Right ventricle myocardium superior (tissue), 1 donor: ENCODE measurements at regions of chr21 and their contacts with region 1.

Region 1: DNA sequence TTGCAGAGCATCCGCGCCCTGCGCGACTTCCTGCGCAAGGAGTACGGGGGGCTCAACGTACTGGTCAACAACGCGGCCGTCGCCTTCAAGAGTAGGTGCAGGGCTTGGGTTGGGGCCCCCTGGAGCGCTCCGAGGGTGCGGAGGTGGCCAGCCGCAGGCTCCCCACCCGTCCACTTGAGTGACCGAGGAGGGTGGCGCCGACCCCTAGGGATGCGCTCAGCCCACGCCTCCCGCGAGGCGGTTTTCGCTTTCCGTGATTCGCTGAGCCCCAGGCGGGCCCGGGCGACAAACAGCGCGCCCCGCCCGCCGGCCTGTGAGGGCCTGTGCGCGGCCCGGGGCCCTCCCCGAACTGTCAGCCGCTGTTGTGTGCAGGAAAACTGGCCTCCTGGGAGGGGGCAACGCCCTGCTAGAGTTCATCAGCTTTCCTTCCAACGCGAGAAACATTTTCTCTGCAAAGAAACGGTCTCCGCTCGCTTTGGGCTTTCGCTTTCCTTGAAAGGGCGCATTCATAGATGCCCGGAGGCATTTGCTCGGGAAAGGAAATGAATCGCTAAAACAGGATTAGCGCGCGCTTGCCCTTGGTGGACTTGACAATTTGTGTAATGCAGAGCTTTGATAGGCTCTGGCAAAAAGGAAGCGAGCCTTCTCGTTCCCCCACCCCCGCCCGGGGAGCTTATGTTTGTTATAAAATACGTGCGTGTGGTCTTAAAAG is 668 bp downstream of the CBR3 start:
- DNase-seq: peak; percentile 89
- ATAC-seq: peak; percentile 94

Region 2: GRCh38 chr21:36209626-36210171 is 74.2 kb after region 1 on chr21:
- intact Hi-C with region 1: loop called (anchors 5 kb)
- DNase-seq: no peak
- ATAC-seq: no peak

Region 3: DNA sequence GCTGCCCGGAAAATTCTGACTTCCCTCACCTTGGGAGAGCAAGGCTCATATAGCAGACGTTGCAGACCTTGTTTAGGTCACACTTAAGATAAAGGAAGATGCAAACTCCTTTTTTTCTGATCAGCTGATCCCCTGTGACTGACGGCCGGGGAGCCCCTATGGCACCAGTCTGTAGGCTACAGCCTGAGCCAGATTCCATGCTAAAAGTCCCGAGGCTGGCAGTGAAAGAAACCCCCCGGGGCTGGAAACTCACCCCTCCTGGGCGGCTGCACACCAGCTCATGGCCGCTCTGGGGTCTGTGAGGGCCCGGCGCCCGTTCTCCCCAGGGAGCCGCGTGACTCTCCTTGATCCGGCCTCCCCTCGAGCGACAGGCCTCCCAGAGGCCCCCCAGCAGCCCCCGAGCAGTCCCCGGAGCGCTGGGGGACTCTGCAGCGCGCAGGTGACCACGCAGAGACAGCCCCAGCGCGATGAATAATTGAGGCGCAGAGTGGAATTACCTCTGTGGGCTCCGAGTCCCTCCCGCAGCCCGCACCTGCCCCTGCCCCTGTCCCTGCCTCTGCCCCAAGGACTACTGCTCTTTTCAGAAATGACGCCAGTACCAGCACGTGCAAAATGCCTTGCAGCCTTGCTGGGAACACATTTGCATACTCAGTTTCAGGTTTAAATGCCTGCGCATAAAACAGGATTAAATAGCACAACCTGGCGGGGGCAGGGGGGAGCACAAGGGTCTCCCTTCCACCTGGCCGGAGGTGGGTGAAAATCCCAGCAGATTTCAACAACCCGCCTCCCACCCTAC is 407.0 kb after region 1 on chr21:
- intact Hi-C with region 1: no loop called
- DNase-seq: no peak
- ATAC-seq: no peak